ENCODE measurements at regions of chr21 and their contacts with region 1.

Region 1: DNA sequence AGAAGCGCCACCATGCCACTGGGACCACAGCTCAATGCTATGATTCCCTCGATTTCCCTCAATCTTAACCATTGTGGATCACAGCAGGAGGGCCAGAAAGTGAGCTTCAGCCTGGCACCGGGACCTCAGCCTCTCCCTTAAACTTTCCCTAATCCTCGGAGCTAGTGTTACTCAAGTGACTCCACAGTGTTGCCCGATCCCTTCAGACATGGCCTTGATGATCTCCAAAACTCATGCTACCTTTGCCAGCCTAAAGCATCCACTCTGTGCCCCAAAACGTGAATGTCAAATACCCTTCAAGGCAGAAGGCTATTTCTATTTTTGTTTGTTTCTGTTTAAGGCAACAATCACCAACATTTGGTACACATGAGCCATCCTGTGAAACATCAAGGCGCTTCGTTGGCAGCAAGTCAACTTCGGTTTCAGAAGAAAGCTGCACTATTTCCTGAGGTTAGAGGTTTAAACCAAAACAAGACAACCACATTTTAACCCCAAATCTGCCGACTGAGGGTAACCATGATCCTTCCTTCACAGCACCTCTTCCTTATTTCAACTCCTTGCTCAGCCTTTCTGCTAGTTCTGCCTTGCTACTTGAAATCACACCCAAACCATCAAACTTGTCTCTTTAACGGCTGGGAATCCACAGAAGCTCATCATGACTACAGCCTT is 94.4 kb upstream of the KRTAP19-8 start:
- DNase-seq: peak; percentile 82
- H3K4me3 Mint-ChIP-seq: peak overlapping the region; percentile 64
- H3K27ac Mint-ChIP-seq: peak overlapping the region; percentile 95
- H3K4me1 Mint-ChIP-seq: peaks cover 65% of the 10 kb centered on the region
- H3K27me3 Mint-ChIP-seq: no peaks in the 10 kb centered on the region

Region 2: GRCh38 chr21:31117128-31117916 is 15.4 kb before region 1 on chr21:
- CTCF ChIA-PET with region 1: interaction called, 4 read pairs
- POLR2A ChIA-PET with region 1: no interaction called
- intact Hi-C with region 1: loop called (anchors 1 kb)
- DNase-seq: peak; percentile 34
- H3K4me3 Mint-ChIP-seq: no peak overlapping the region
- H3K27ac Mint-ChIP-seq: peak overlapping the region; percentile 50
- H3K4me1 Mint-ChIP-seq: peaks cover 17% of the 10 kb centered on the region
- H3K27me3 Mint-ChIP-seq: no peaks in the 10 kb centered on the region

Region 3: DNA sequence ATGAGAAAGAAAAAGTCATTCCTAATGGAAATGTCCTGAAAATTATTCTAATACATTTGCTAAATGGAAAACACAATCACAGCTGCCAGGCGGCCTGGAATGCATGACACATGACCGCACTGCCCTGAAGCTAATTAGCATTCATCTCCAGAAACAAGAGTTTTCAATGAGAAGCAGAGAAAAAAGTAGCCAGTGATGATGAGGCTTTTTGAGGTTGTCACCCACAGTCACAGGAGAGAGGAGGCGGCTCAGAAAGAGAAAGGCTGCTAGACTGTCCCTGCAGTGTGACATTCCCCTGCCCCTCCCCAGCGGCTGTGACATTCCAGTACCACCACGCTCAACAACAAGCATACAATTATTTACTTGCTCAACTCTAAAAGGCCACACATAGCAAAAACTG is 28.4 kb after region 1 on chr21:
- CTCF ChIA-PET with region 1: interaction called, 3 read pairs
- POLR2A ChIA-PET with region 1: interaction called, 5 read pairs
- intact Hi-C with region 1: loop called (anchors 1 kb)
- DNase-seq: peak; percentile 58
- H3K4me3 Mint-ChIP-seq: peak overlapping the region; percentile 53
- H3K27ac Mint-ChIP-seq: peak overlapping the region; percentile 77
- H3K4me1 Mint-ChIP-seq: peaks cover 84% of the 10 kb centered on the region
- H3K27me3 Mint-ChIP-seq: no peaks in the 10 kb centered on the region

Region 4: GRCh38 chr21:31173881-31174555 is 41.3 kb after region 1 on chr21:
- CTCF ChIA-PET with region 1: no interaction called
- POLR2A ChIA-PET with region 1: interaction called, 4 read pairs
- intact Hi-C with region 1: loop called (anchors 1 kb)
- DNase-seq: peak; percentile 75
- H3K4me3 Mint-ChIP-seq: peak overlapping the region; percentile 56
- H3K27ac Mint-ChIP-seq: peak overlapping the region; percentile 57
- H3K4me1 Mint-ChIP-seq: peaks cover 87% of the 10 kb centered on the region
- H3K27me3 Mint-ChIP-seq: no peaks in the 10 kb centered on the region

Region 5: GRCh38 chr21:31347435-31348032 is 214.8 kb after region 1 on chr21:
- CTCF ChIA-PET with region 1: no interaction called
- POLR2A ChIA-PET with region 1: no interaction called
- intact Hi-C with region 1: no loop called
- DNase-seq: no peak
- H3K4me3 Mint-ChIP-seq: no peak overlapping the region
- H3K27ac Mint-ChIP-seq: no peak overlapping the region
- H3K4me1 Mint-ChIP-seq: peaks cover 50% of the 10 kb centered on the region
- H3K27me3 Mint-ChIP-seq: no peaks in the 10 kb centered on the region

Region 6: GRCh38 chr21:31659536-31660258 is 527.0 kb after region 1 on chr21 and contains the start of gene SOD1:
- CTCF ChIA-PET with region 1: no interaction called
- POLR2A ChIA-PET with region 1: no interaction called
- intact Hi-C with region 1: loop called (anchors 1 kb)
- DNase-seq: peak; percentile 96
- H3K4me3 Mint-ChIP-seq: peak within 1 kb of the TSS; percentile 98
- H3K27ac Mint-ChIP-seq: peak within 1 kb of the TSS; percentile 99
- H3K4me1 Mint-ChIP-seq: peaks cover 65% of the 10 kb centered on the region
- H3K27me3 Mint-ChIP-seq: no peaks in the 10 kb centered on the region
- total RNA-seq, gene SOD1: 280 to 286 TPM